Activated naive CD8-positive, alpha-beta T cell treated with anti-CD3 and anti-CD28 coated beads, Interleukin-2, amount 10 ng/mL, durations not matched to agents 7 days and 5 days (primary cell): ENCODE measurements at regions of chr1 and their contacts with region 1.

Region 1: GRCh38 chr1:116754198-116754977 is at the start of gene CD2:
- DNase-seq: peak; percentile 50
- ATAC-seq: peak; percentile 80
- H3K4me3 Mint-ChIP-seq: peak within 1 kb of the TSS; percentile 98
- H3K27ac Mint-ChIP-seq: peak within 1 kb of the TSS; percentile 97
- H3K4me1 Mint-ChIP-seq: peaks cover 28% of the 10 kb centered on the region
- H3K27me3 Mint-ChIP-seq: no peaks in the 10 kb centered on the region
- total RNA-seq, gene CD2: 227 to 229 TPM

Region 2: GRCh38 chr1:116433275-116434257 is 320.8 kb before region 1 on chr1:
- POLR2A ChIA-PET with region 1: no interaction called
- DNase-seq: no peak
- ATAC-seq: no peak
- H3K4me3 Mint-ChIP-seq: no peak overlapping the region
- H3K27ac Mint-ChIP-seq: no peak overlapping the region
- H3K4me1 Mint-ChIP-seq: no peaks in the 10 kb centered on the region
- H3K27me3 Mint-ChIP-seq: peaks cover 30% of the 10 kb centered on the region

Region 3: GRCh38 chr1:116737020-116737854 is 17.2 kb before region 1 on chr1:
- POLR2A ChIA-PET with region 1: interaction called, 131 read pairs
- DNase-seq: peak; percentile 81
- ATAC-seq: peak; percentile 57
- H3K4me3 Mint-ChIP-seq: peak overlapping the region; percentile 76
- H3K27ac Mint-ChIP-seq: peak overlapping the region; percentile 97
- H3K4me1 Mint-ChIP-seq: peaks cover 52% of the 10 kb centered on the region
- H3K27me3 Mint-ChIP-seq: no peaks in the 10 kb centered on the region

Region 4: DNA sequence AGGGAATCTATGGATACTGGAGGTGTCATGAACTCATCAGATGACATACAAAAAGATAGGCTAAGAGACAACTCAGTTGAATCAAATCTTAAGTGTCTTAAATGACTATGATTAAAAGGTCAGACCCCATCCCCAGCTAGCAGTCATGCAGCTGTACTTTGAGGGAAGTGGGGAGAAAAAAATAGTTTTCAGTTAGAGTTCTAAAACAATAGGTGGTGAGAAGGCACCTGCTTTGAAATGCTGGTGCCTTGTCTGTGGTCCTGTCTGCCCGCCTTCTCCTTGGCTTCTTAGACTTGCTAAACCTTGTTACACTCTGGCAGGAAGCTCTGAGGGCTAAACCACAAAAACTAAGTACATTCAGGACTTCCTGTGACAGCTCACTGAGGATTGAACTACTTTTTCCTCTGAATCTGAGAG is 15.2 kb after region 1 on chr1:
- POLR2A ChIA-PET with region 1: interaction called, 196 read pairs
- DNase-seq: no peak
- ATAC-seq: peak; percentile 68
- H3K4me3 Mint-ChIP-seq: peak overlapping the region; percentile 73
- H3K27ac Mint-ChIP-seq: peak overlapping the region; percentile 96
- H3K4me1 Mint-ChIP-seq: peaks cover 76% of the 10 kb centered on the region
- H3K27me3 Mint-ChIP-seq: no peaks in the 10 kb centered on the region

Region 5: DNA sequence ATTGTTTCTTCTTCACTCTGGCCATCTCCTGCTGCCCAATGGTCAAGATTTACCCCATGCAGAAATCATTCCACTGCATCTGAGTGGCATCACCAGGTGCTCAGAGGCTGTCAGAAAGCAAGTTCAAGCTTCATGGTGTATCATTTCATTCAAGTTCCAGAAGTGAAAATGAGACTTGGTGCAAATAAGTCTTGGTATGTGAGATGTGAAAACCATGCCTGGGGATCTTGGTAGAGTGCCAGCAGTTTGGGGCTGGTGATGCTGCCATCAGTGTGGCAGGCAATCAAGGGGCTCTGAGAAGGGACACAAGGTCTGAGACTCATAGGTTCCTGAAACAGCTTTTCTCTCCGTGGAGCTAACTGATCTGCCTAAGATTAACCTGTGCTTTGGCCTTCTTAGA is 51.9 kb after region 1 on chr1:
- POLR2A ChIA-PET with region 1: interaction called, 316 read pairs
- DNase-seq: no peak
- ATAC-seq: peak; percentile 24
- H3K4me3 Mint-ChIP-seq: peak overlapping the region; percentile 82
- H3K27ac Mint-ChIP-seq: peak overlapping the region; percentile 90
- H3K4me1 Mint-ChIP-seq: peaks cover 80% of the 10 kb centered on the region
- H3K27me3 Mint-ChIP-seq: no peaks in the 10 kb centered on the region